ENCODE measurements at regions of chr1 and their contacts with region 1.

Region 1: GRCh38 chr1:239898062-239898730 is 193.5 kb upstream of the FMN2 start:
- DNase-seq: peak; percentile 38 to 73 (median 51)
- H3K4me3 ChIP-seq: no peak overlapping the region
- H3K4me3 Mint-ChIP-seq: no peak overlapping the region
- H3K27ac ChIP-seq: no peak overlapping the region
- H3K27ac Mint-ChIP-seq: peak overlapping the region in 1 of 8 donors; percentile 10
- H3K4me1 ChIP-seq: no peaks in the 10 kb centered on the region
- H3K4me1 Mint-ChIP-seq: peaks cover 2 to 7% (median 7%) of the 10 kb centered on the region in 3 donors
- H3K27me3 ChIP-seq: no peaks in the 10 kb centered on the region
- H3K27me3 Mint-ChIP-seq: peaks cover 0 to 19% of the 10 kb centered on the region in 2 donors

Region 2: DNA sequence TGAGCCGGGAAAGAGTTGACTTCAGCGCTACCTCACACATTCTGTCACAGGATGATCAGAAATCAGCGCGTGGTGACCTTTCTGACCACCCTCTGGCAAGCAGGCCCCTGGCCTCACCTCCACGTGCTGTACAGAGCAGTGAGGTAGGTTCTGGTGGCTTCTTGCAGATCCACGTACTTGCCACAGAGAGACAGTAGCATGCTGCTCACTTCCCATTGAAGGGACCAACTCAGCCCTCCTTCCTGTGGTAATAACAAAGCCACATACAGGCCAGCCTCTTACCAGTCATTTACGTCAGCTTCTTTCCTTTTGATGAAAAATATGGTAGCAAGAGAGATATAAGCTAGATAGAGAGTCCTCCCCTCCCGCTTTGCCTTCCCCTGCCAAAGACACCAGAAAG is 311.1 kb before region 1 on chr1:
- CTCF ChIA-PET with region 1: interaction called, 13 read pairs
- POLR2A ChIA-PET with region 1: no interaction called
- DNase-seq: peak in 4 of 5 donors; percentile 12 to 67 (median 60)
- H3K4me3 ChIP-seq: no peak overlapping the region
- H3K4me3 Mint-ChIP-seq: peak overlapping the region in 2 of 7 donors; percentile 35 to 49
- H3K27ac ChIP-seq: no peak overlapping the region
- H3K27ac Mint-ChIP-seq: peak overlapping the region in 6 of 8 donors; percentile 1 to 87 (median 14)
- H3K4me1 ChIP-seq: peaks cover 5% of the 10 kb centered on the region
- H3K4me1 Mint-ChIP-seq: peaks cover 7 to 8% (median 7%) of the 10 kb centered on the region in 3 donors
- H3K27me3 ChIP-seq: no peaks in the 10 kb centered on the region
- H3K27me3 Mint-ChIP-seq: no peaks in the 10 kb centered on the region

Measured in CD8-positive, alpha-beta memory T cell (primary cell).